Activated T-helper 1 cell treated with anti-CD3 and anti-CD28 coated beads, Interleukin-12 subunit alpha, Interleukin-12 subunit beta, Interleukin-2, Interleukin-4 antibody, amounts not matched to agents 30 ng/mL and 10 ng/mL and 1 ng/mL, durations not matched to agents 14 hours and 24 hours and 36 hours (primary cell): ENCODE measurements at regions of chr17 and their contacts with region 1.

Region 1: GRCh38 chr17:19992803-19993713 is 15.4 kb upstream of the AKAP10 start:
- DNase-seq: peak; percentile 64
- H3K4me3 Mint-ChIP-seq: no peak overlapping the region
- H3K27ac Mint-ChIP-seq: no peak overlapping the region
- H3K4me1 Mint-ChIP-seq: no peaks in the 10 kb centered on the region
- H3K27me3 Mint-ChIP-seq: peaks cover 25% of the 10 kb centered on the region

Region 2: GRCh38 chr17:19928299-19928698 is 64.8 kb before region 1 on chr17:
- intact Hi-C with region 1: no loop called
- DNase-seq: no peak
- H3K4me3 Mint-ChIP-seq: no peak overlapping the region
- H3K27ac Mint-ChIP-seq: peak overlapping the region; percentile 34
- H3K4me1 Mint-ChIP-seq: peaks cover 22% of the 10 kb centered on the region
- H3K27me3 Mint-ChIP-seq: no peaks in the 10 kb centered on the region

Region 3: GRCh38 chr17:19977311-19978208 is 15.5 kb before region 1 on chr17 and contains the start of gene AKAP10:
- intact Hi-C with region 1: loop called (anchors 2 kb)
- DNase-seq: peak; percentile 88
- H3K4me3 Mint-ChIP-seq: peak within 1 kb of the TSS; percentile 91
- H3K27ac Mint-ChIP-seq: peak within 1 kb of the TSS; percentile 94
- H3K4me1 Mint-ChIP-seq: peaks cover 42% of the 10 kb centered on the region
- H3K27me3 Mint-ChIP-seq: no peaks in the 10 kb centered on the region
- total RNA-seq, gene AKAP10: 38.8 and 39.3 TPM in 2 replicates

Region 4: GRCh38 chr17:20009302-20010098 is 16.4 kb after region 1 on chr17 and contains the start of gene SPECC1:
- intact Hi-C with region 1: loop called (anchors 1 kb)
- DNase-seq: peak; percentile 84
- H3K4me3 Mint-ChIP-seq: peak within 1 kb of the TSS; percentile 92
- H3K27ac Mint-ChIP-seq: peak within 1 kb of the TSS; percentile 65
- H3K4me1 Mint-ChIP-seq: peaks cover 15% of the 10 kb centered on the region
- H3K27me3 Mint-ChIP-seq: peaks cover 70% of the 10 kb centered on the region
- total RNA-seq, gene SPECC1: 7.2 and 11.1 TPM in 2 replicates

Region 5: DNA sequence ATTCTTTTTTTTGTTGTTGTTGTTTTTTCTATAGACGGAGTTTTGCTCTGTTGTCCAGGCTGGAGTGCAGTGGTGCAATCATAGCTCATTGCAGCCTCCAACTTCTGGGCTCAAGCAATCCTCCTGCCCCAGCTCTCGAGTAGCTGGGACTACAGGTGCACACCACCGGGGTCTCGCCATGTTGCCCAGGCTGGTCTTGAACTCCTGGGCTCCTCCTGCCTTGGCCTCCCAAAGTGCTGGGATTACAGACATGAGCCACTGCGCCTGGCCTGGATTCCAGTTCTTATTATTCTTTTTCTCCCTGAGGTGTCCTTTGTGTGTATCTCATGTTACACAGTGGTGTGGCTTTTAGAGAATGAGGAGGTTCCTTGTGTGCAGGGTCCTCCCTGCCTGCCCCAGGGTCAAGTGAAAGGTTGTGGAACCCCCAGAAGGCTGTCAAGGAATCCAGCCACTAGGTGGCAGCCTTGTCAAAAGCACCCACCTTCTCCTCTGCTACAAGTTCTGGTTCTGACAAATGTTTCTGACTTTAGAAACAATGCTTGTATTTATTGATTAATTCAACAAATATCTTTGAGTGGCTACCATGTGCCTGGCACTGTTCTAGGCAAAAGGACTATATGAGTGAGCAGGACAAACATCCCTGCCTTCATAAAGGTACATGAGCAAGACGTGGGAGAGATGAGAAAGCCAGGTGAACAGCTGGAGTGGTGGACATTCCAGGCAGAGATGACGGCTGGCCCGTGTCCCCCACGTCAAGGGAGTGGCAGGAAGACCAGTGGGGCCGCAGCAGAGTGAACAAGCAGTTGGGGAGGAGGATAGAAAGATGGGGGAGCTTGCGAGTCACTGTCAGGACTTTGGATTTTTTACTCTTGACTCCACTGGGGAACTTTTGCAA is 128.5 kb after region 1 on chr17:
- intact Hi-C with region 1: loop called (anchors 1 kb)
- DNase-seq: peak; percentile 40
- H3K4me3 Mint-ChIP-seq: no peak overlapping the region
- H3K27ac Mint-ChIP-seq: no peak overlapping the region
- H3K4me1 Mint-ChIP-seq: peaks cover 4% of the 10 kb centered on the region
- H3K27me3 Mint-ChIP-seq: peaks cover 8% of the 10 kb centered on the region

Region 6: DNA sequence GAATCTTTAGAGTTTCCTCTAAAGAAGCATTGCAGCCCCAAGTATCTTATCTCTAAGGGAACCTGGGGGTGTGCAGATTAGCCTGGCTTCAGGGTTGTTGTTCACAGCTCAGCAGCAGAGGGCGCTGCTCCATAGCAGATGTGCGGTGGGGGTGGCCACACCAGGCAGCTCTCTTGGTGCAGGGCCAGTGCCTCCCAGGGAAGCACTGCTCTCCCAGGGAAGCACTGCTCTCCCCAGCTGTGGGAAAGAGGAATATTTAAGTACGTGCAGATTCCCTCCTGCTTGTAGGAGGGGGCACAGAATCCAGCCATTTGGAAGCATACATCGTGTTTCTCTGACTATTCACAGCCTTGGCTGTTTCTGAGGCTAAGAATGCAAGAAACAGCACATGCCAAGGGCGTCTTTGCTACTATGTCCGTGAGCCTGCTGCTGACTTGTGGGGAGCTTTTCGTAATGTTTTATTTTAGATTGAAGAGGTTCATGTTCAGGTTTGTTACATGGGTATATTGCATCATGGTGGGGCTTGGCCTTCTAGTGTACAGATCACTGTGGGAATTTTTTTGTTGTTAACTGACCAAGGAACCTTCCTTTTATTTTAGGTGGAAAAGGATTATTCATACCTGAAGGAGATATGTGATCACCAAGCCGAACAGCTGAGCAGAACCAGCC is 233.9 kb after region 1 on chr17:
- intact Hi-C with region 1: loop called (anchors 1 kb)
- DNase-seq: peak; percentile 74
- H3K4me3 Mint-ChIP-seq: no peak overlapping the region
- H3K27ac Mint-ChIP-seq: peak overlapping the region; percentile 31
- H3K4me1 Mint-ChIP-seq: peaks cover 18% of the 10 kb centered on the region
- H3K27me3 Mint-ChIP-seq: peaks cover 2% of the 10 kb centered on the region

Region 7: DNA sequence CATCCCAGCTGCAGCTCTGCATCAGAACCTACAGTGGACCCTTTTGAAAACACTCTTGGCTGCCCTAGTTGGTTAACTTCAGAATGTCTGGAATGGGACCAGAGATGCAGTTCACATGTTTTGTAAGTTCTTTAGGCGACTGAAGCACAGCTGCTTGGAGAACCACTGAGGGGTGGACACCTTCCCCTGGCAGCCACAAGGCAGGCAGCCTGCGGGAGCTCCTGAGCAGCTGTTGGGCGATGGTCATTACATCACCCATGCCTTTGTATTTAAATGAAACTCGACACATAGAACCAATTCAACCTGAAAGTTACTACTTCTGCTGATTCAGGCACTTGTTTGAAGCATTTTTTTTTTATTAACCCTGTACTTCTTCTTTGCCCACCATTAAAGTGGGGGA is 322.8 kb after region 1 on chr17:
- intact Hi-C with region 1: loop called (anchors 5 kb)
- DNase-seq: no peak
- H3K4me3 Mint-ChIP-seq: no peak overlapping the region
- H3K27ac Mint-ChIP-seq: no peak overlapping the region
- H3K4me1 Mint-ChIP-seq: peaks cover under 1% of the 10 kb centered on the region
- H3K27me3 Mint-ChIP-seq: no peaks in the 10 kb centered on the region